Ascending aorta (tissue), 2 donors: ENCODE measurements at regions of chr2 and their contacts with region 1.

Region 1: GRCh38 chr2:219229305-219230058 is at the starts of genes ANKZF1 and ATG9A:
- DNase-seq: peak; percentile 98 to 99
- H3K4me3 ChIP-seq: peak within 1 kb of the TSS; percentile 66 to 96
- H3K27ac ChIP-seq: peak within 1 kb of the TSS; percentile 93 to 97
- H3K4me1 ChIP-seq: peaks cover 4 to 23% of the 10 kb centered on the region in 2 donors
- H3K27me3 ChIP-seq: no peaks in the 10 kb centered on the region
- CTCF ChIP-seq: no peak
- total RNA-seq, gene ANKZF1: 53.1 TPM
- total RNA-seq, gene ATG9A: 135 TPM

Region 2: DNA sequence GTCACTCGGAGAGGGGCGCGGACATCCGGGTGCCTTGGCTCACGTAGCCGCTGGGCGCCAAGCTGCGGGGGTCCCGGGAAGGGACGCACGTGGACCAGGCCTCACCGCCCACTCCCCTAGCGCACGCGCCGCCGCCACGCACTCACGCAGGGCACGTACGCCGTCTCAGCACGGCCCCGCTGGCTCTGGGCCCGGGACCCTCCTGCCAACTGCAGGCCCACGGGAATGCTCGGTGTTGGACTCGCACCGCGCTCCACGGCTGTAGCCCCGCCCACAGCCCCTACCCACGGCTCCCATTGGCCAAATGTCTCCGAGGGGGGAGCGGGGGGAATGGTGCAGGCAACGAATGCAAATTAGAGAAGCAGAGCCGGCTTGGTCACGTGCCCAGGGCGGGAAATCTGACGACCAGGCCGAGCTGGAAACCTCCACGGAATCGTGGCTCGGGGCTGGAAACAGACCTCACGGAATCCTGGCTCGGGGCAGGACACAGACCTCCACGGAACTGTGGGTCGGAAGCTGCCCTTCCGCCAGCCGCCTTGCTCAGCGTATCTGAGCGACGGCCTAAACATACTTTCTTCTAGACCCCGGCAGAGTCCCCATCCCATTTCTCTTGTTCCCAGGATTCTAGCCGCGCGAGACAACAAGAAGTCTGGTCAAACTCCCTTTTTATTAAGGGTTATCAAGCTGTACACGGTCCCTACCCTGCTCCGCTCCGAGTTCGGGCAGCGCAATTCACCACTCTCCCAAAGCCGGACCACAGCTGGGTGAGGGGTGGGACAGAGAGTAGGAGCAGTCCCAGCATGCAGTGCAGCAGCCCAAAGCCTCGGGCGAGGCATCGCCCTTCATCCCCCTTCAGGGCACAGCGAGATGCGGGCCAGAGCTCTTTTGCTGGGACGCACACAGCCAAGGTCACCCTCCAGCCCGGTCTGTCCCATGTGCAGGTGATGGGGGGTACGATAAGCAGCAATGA is 10.5 kb before region 1 on chr2 and contains the start of gene ABCB6:
- intact Hi-C with region 1: loop called (anchors 1 kb)
- DNase-seq: peak; percentile 93 to 99
- H3K4me3 ChIP-seq: peak within 1 kb of the TSS; percentile 64 to 68
- H3K27ac ChIP-seq: peak within 1 kb of the TSS; percentile 92 to 95
- H3K4me1 ChIP-seq: peaks cover 12 to 31% of the 10 kb centered on the region in 2 donors
- H3K27me3 ChIP-seq: no peaks in the 10 kb centered on the region
- CTCF ChIP-seq: no peak
- total RNA-seq, gene ABCB6: 17.9 TPM

Region 3: DNA sequence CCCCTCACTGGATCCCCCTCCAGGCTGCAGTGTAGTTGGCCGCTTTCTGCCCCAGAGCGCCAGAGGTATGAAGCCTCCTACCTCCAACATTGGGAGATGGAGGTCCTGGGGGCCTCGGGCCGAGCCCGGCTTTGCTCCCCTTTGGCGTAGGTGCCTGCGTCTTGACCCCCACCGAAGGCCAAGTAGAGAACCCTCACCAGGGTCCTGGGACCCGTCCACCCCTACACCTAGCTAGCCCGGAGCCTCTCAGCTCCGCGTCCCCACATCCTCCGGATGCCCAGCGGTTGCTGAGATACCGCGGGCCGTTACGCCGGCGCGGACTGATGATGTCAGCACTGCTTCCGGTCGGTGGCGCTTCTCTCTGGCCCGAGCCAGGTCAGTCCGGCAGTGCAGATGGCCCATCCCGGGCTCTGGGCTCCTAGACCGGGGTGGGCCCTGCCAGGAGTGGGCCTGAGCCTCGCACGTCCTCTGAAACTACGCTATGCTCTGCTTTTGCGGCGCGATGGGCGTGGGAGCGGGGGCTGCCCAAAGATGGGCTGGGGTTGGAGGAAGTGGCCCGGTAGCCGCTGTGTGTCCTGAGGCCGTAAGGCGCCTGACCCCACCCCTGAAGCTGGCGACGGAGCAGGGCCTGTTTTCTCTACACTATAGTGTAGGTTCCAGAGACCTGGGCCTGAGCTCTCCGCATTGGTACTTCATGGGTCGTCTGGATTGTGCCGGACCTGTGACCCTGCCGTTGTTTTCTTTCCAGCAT is 15.8 kb after region 1 on chr2 and contains the starts of genes GLB1L and STK16:
- intact Hi-C with region 1: loop called (anchors 1 kb)
- DNase-seq: peak; percentile 69 to 97
- H3K4me3 ChIP-seq: peak within 1 kb of the TSS; percentile 82 to 96
- H3K27ac ChIP-seq: peak within 1 kb of the TSS; percentile 96 to 99
- H3K4me1 ChIP-seq: peaks cover 20 to 40% of the 10 kb centered on the region in 2 donors
- H3K27me3 ChIP-seq: no peaks in the 10 kb centered on the region
- CTCF ChIP-seq: no peak
- total RNA-seq, gene GLB1L: 1.8 TPM
- total RNA-seq, gene STK16: 15.2 TPM

Region 4: GRCh38 chr2:219255538-219255937 is 26.1 kb after region 1 on chr2:
- intact Hi-C with region 1: no loop called
- DNase-seq: no peak
- H3K4me3 ChIP-seq: no peak overlapping the region
- H3K27ac ChIP-seq: no peak overlapping the region
- H3K4me1 ChIP-seq: peaks cover 4 to 25% of the 10 kb centered on the region in 2 donors
- H3K27me3 ChIP-seq: no peaks in the 10 kb centered on the region
- CTCF ChIP-seq: no peak